CD4-positive, alpha-beta T cell (primary cell): ENCODE measurements at regions of chr2 and their contacts with region 1.

Region 1: GRCh38 chr2:42663106-42663780 is 94.8 kb downstream of the MTA3 start:
- DNase-seq: peak; percentile 29 to 84 (median 60)
- ATAC-seq: peak; percentile 97
- H3K4me3 ChIP-seq: no peak overlapping the region
- H3K4me3 Mint-ChIP-seq: no peak overlapping the region
- H3K27ac ChIP-seq: no peak overlapping the region
- H3K27ac Mint-ChIP-seq: peak overlapping the region; percentile 79
- H3K4me1 ChIP-seq: peaks cover 8% of the 10 kb centered on the region
- H3K4me1 Mint-ChIP-seq: peaks cover 21% of the 10 kb centered on the region
- H3K27me3 ChIP-seq: no peaks in the 10 kb centered on the region
- H3K27me3 Mint-ChIP-seq: no peaks in the 10 kb centered on the region
- CTCF ChIP-seq: peak; percentile 92

Region 2: GRCh38 chr2:41869542-41870264 is 793.5 kb before region 1 on chr2:
- CTCF ChIA-PET with region 1: interaction called, 8 read pairs
- POLR2A ChIA-PET with region 1: no interaction called
- intact Hi-C with region 1: loop called (anchors 2 to 5 kb)
- DNase-seq: peak; percentile 51 to 85 (median 67)
- ATAC-seq: peak; percentile 78
- H3K4me3 ChIP-seq: no peak overlapping the region
- H3K4me3 Mint-ChIP-seq: no peak overlapping the region
- H3K27ac ChIP-seq: no peak overlapping the region
- H3K27ac Mint-ChIP-seq: no peak overlapping the region
- H3K4me1 ChIP-seq: peaks cover 34% of the 10 kb centered on the region
- H3K4me1 Mint-ChIP-seq: peaks cover 11% of the 10 kb centered on the region
- H3K27me3 ChIP-seq: no peaks in the 10 kb centered on the region
- H3K27me3 Mint-ChIP-seq: peaks cover 11% of the 10 kb centered on the region
- CTCF ChIP-seq: peak; percentile 83

Region 3: GRCh38 chr2:42360890-42361727 is 302.1 kb before region 1 on chr2 and contains the start of gene COX7A2L:
- CTCF ChIA-PET with region 1: no interaction called
- POLR2A ChIA-PET with region 1: interaction called, 3 read pairs
- intact Hi-C with region 1: loop called in 1 of 2 experiments (anchors 5 kb)
- DNase-seq: peak; percentile 93 to 98 (median 96)
- ATAC-seq: peak; percentile 91
- H3K4me3 ChIP-seq: peak within 1 kb of the TSS; percentile 88
- H3K4me3 Mint-ChIP-seq: peak within 1 kb of the TSS; percentile 88
- H3K27ac ChIP-seq: peak within 1 kb of the TSS; percentile 91 to 96
- H3K27ac Mint-ChIP-seq: peak within 1 kb of the TSS; percentile 99
- H3K4me1 ChIP-seq: peaks cover 34% of the 10 kb centered on the region
- H3K4me1 Mint-ChIP-seq: peaks cover 45% of the 10 kb centered on the region
- H3K27me3 ChIP-seq: no peaks in the 10 kb centered on the region
- H3K27me3 Mint-ChIP-seq: no peaks in the 10 kb centered on the region
- CTCF ChIP-seq: no peak
- total RNA-seq, gene COX7A2L: 51.3 to 57.3 TPM

Region 4: GRCh38 chr2:42494355-42495233 is 168.6 kb before region 1 on chr2:
- CTCF ChIA-PET with region 1: interaction called, 6 read pairs
- POLR2A ChIA-PET with region 1: interaction called, 6 read pairs
- intact Hi-C with region 1: loop called (anchors 1 kb)
- DNase-seq: peak; percentile 52 to 84 (median 68)
- ATAC-seq: peak; percentile 47
- H3K4me3 ChIP-seq: peak overlapping the region; percentile 56
- H3K4me3 Mint-ChIP-seq: peak overlapping the region; percentile 96
- H3K27ac ChIP-seq: no peak overlapping the region
- H3K27ac Mint-ChIP-seq: peak overlapping the region; percentile 68
- H3K4me1 ChIP-seq: peaks cover 17% of the 10 kb centered on the region
- H3K4me1 Mint-ChIP-seq: peaks cover 8% of the 10 kb centered on the region
- H3K27me3 ChIP-seq: peaks cover 0 to 6% of the 10 kb centered on the region in 2 experiments
- H3K27me3 Mint-ChIP-seq: no peaks in the 10 kb centered on the region
- CTCF ChIP-seq: peak; percentile 90

Region 5: DNA sequence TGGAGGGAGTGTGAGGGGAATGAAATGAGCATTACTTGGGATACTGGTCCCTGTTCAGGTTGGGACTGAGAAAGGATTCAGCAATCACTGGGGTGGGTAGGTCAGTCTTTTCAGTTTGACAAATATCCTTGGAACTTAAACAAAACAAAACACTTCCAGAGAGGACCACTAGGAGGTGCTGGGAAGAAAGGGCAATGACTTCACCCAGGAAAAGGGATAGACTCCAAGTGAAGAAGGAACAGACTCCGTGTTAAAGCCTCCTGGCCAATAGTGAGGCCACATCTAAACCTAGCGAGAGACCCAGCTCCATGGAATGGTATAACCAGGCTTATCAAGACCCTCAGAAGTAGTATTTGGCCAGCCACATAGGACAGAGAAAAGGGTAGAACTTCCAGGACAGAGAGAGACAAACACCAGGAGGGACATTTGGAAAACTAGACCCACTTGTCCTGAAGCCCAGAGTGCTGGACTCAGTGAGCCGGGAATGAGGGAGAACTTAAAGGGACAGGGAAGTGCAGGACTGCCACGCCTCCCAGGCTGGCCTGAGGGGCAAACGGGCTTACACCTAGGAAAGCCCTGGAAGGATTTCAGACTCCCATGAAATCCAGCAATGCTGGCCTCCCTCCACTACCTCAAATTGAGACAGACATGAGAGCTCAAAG is 149.9 kb before region 1 on chr2:
- CTCF ChIA-PET with region 1: no interaction called
- POLR2A ChIA-PET with region 1: interaction called, 3 read pairs
- intact Hi-C with region 1: loop called (anchors 1 kb)
- DNase-seq: peak in 4 of 14 experiments; percentile 23 to 45 (median 42)
- ATAC-seq: peak; percentile 32
- H3K4me3 ChIP-seq: no peak overlapping the region
- H3K4me3 Mint-ChIP-seq: no peak overlapping the region
- H3K27ac ChIP-seq: no peak overlapping the region
- H3K27ac Mint-ChIP-seq: no peak overlapping the region
- H3K4me1 ChIP-seq: no peaks in the 10 kb centered on the region
- H3K4me1 Mint-ChIP-seq: peaks cover 9% of the 10 kb centered on the region
- H3K27me3 ChIP-seq: no peaks in the 10 kb centered on the region
- H3K27me3 Mint-ChIP-seq: no peaks in the 10 kb centered on the region
- CTCF ChIP-seq: peak; percentile 61

Region 6: DNA sequence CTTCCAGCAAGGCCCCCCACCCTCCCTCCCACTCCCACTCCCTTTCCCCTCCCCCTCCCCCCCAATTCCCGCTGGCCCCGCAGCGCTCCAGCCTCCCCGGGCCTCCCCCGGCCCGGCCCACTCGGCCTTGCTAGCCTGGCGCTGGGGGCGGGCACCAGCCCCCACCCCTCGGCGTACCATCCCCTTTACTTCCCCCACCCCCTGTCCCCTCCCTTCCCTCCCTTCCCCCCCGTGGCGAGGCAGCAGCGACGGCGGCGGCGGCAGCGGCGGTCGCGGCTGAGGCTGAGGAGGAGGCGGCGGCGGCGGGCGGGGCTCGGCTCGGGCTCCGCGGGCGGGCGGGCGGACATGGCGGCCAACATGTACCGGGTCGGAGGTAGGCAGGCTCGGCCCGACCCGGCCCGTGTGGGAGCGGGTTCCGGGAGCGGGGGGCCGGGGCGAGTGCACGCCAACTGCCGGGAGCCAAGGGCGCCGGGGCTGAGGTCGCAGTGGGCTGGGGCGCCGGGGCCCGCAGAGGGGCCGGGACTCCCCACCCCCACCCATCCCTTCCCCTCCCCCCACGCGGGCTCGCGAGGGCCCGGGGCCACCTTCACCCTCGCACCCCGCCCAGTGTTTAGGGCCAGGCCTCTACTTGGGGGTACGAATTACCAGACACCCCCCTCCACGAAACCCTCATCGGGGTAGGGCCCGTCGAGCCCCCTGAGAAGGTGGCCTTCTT is 94.7 kb before region 1 on chr2 and contains the start of gene MTA3:
- CTCF ChIA-PET with region 1: interaction called, 6 read pairs
- POLR2A ChIA-PET with region 1: interaction called, 3 read pairs
- intact Hi-C with region 1: loop called (anchors 5 kb)
- DNase-seq: peak; percentile 41 to 80 (median 67)
- ATAC-seq: peak; percentile 72
- H3K4me3 ChIP-seq: peak within 1 kb of the TSS; percentile 66
- H3K4me3 Mint-ChIP-seq: peak within 1 kb of the TSS; percentile 98
- H3K27ac ChIP-seq: no peak within 1 kb of the TSS
- H3K27ac Mint-ChIP-seq: peak within 1 kb of the TSS; percentile 89
- H3K4me1 ChIP-seq: peaks cover 12% of the 10 kb centered on the region
- H3K4me1 Mint-ChIP-seq: peaks cover 43% of the 10 kb centered on the region
- H3K27me3 ChIP-seq: no peaks in the 10 kb centered on the region
- H3K27me3 Mint-ChIP-seq: no peaks in the 10 kb centered on the region
- CTCF ChIP-seq: no peak
- total RNA-seq, gene MTA3: 27.0 to 30.9 TPM

Region 7: GRCh38 chr2:42602218-42602876 is 60.9 kb before region 1 on chr2:
- CTCF ChIA-PET with region 1: no interaction called
- POLR2A ChIA-PET with region 1: no interaction called
- intact Hi-C with region 1: no loop called
- DNase-seq: no peak
- ATAC-seq: no peak
- H3K4me3 ChIP-seq: no peak overlapping the region
- H3K4me3 Mint-ChIP-seq: no peak overlapping the region
- H3K27ac ChIP-seq: no peak overlapping the region
- H3K27ac Mint-ChIP-seq: no peak overlapping the region
- H3K4me1 ChIP-seq: no peaks in the 10 kb centered on the region
- H3K4me1 Mint-ChIP-seq: peaks cover 23% of the 10 kb centered on the region
- H3K27me3 ChIP-seq: no peaks in the 10 kb centered on the region
- H3K27me3 Mint-ChIP-seq: no peaks in the 10 kb centered on the region
- CTCF ChIP-seq: no peak